Naive thymus-derived CD8-positive, alpha-beta T cell (primary cell): ENCODE measurements at regions of chr14 and their contacts with region 1.

Region 1: DNA sequence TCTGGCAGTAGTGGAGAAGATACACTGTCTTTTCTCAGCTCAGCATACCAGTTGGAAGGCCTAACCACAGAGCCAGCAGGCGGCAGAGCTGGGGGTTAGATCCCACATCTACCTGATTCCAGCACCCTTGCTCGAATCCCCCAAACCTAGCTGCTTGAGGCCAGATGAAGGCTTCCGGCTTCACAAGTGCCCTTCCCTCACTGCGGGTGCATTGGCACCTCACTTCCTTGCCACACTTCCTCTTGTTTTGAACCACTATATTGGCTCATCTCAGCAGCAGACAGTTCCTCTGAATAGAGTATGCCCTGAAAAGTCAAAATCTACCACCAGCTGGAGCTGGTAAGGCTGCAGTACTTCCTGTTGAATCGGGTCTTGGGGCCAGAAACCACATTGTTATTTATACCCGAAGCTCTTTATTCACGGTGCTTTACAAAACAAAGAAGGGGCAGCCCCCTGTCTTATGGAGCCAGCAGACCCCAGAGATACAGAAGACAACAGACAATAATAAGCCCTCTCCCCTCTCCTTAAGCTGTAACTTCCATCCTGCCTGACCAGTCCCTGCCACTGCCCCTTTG is 233.7 kb downstream of the EFCAB11 start:
- DNase-seq: peak; percentile 51 to 93 (median 83)
- ATAC-seq: peak; percentile 86 to 94
- H3K4me3 Mint-ChIP-seq: peak overlapping the region; percentile 62 to 83 (median 68)
- H3K27ac Mint-ChIP-seq: peak overlapping the region; percentile 97 to 99 (median 98)
- H3K4me1 Mint-ChIP-seq: peaks cover 49 to 95% (median 88%) of the 10 kb centered on the region in 4 donors
- H3K27me3 Mint-ChIP-seq: no peaks in the 10 kb centered on the region

Region 2: DNA sequence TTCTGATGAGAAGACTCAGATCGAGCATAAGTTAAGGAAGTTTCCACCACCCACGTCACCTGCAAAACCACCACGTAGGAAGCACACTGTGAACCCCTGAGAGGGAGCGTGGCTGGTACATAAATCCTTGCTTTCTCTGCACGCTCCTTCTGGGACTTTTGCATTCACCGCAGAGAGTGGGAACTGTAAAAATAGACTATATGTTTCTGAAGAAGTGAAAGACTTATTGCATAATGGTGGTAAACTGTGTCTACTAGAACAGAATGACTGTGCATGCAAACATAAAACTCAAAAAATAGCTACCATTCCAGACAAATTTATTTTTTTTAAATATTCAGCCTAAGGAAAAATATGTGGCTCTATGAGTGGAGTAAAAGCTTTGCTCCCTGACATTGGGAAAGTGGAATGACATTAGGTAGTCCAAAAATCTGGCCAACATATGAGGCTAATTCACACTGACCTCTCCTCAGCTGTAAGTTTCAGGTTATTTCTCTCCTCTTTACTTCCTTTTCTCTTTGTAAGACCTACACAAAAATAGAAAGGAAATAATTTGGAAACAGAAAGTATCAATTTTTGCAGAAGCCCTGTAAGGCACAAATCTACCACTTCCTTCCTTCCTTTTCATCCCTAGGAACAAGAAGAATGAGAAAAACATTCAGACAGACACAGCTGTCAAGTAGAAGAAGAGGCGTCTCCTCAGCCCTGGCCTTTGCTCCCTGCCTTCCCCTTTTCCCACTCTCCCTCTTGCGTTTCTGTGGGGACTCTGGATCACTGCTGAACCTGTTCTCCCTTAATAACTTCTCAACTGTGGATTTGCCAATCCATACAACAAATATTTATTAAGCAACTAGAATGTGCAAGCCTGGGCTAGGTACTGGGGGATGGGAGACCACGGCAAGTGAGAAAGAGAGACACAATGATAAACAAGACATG is 39.5 kb before region 1 on chr14:
- POLR2A ChIA-PET with region 1: interaction called, 25 read pairs
- DNase-seq: peak in 7 of 10 donors; percentile 8 to 47 (median 24)
- ATAC-seq: peak; percentile 78 to 85
- H3K4me3 Mint-ChIP-seq: peak overlapping the region; percentile 58 to 90 (median 83)
- H3K27ac Mint-ChIP-seq: peak overlapping the region; percentile 78 to 99 (median 95)
- H3K4me1 Mint-ChIP-seq: peaks cover 21 to 49% (median 44%) of the 10 kb centered on the region in 4 donors
- H3K27me3 Mint-ChIP-seq: no peaks in the 10 kb centered on the region

Region 3: DNA sequence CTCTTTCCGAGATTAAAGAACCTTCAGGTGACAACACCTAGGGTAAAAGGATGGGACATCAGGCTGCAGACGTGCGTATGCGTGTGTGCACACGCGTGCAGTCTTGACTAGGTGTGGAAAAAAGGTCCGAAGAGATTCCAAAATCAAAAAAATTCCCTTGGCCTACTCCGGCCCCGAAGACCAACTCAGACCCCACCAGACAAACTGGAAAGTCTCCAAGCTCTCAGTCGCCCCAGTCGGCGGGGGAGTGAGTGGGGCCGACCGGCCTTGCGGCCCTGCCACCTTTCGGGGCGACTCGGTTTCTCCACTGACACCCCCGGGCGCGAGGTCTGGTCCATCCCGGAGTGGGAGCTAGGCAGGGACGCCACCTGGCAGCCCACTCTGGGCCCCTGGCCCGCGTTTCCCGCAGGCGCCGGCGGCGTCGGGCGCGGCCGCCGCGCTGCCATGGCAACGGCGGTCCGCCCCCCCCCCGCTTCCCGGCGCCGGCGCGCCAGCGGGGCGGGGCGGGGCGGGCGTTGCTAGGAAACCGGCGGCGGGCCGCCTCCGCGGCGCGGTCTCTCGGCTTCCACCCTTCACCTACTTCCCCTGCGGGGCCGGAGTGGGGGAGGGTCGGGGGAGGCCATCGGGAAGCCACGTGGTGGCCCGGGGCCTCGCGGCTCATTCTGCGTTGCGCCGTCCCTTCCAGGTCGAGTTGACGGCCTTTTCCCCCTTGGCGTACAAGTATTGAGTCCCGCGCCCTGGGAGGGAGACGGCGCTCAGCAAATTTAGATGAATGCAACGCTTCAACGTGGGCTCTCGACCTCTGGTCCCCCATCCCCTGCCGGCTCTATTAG is 19.4 kb before region 1 on chr14:
- POLR2A ChIA-PET with region 1: interaction called, 48 read pairs
- DNase-seq: peak; percentile 68 to 92 (median 82)
- ATAC-seq: peak; percentile 82 to 90
- H3K4me3 Mint-ChIP-seq: peak overlapping the region; percentile 79 to 90 (median 86)
- H3K27ac Mint-ChIP-seq: peak overlapping the region; percentile 79 to 97 (median 94)
- H3K4me1 Mint-ChIP-seq: peaks cover 20 to 57% (median 46%) of the 10 kb centered on the region in 4 donors
- H3K27me3 Mint-ChIP-seq: no peaks in the 10 kb centered on the region

Region 4: DNA sequence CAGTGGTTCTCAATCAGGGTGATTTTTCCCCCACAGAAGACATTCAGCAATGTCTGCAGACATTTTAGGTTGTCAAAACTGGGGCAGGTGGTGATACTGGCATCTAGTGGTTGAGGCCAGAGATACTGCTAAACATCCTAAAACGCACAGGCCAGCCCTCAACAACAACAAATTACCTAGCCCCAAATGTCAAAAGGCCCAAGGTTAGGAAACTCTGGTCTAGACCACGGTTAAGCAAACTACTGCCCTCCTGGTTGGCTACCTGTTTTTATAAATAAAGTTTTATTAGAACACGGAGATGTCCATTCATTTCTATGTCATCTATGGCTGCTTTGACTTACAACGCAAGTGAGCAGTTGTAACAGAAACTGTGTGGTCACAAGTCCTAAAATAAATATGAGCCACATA is 47.0 kb after region 1 on chr14:
- POLR2A ChIA-PET with region 1: interaction called, 31 read pairs
- DNase-seq: peak; percentile 14 to 84 (median 71)
- ATAC-seq: peak; percentile 97 to 98
- H3K4me3 Mint-ChIP-seq: peak overlapping the region; percentile 43 to 82 (median 76)
- H3K27ac Mint-ChIP-seq: peak overlapping the region; percentile 61 to 96 (median 86)
- H3K4me1 Mint-ChIP-seq: peaks cover 24 to 52% (median 41%) of the 10 kb centered on the region in 4 donors
- H3K27me3 Mint-ChIP-seq: no peaks in the 10 kb centered on the region